Body of pancreas (tissue), 4 donors: ENCODE measurements at regions of chr3 and their contacts with region 1.

Region 1: DNA sequence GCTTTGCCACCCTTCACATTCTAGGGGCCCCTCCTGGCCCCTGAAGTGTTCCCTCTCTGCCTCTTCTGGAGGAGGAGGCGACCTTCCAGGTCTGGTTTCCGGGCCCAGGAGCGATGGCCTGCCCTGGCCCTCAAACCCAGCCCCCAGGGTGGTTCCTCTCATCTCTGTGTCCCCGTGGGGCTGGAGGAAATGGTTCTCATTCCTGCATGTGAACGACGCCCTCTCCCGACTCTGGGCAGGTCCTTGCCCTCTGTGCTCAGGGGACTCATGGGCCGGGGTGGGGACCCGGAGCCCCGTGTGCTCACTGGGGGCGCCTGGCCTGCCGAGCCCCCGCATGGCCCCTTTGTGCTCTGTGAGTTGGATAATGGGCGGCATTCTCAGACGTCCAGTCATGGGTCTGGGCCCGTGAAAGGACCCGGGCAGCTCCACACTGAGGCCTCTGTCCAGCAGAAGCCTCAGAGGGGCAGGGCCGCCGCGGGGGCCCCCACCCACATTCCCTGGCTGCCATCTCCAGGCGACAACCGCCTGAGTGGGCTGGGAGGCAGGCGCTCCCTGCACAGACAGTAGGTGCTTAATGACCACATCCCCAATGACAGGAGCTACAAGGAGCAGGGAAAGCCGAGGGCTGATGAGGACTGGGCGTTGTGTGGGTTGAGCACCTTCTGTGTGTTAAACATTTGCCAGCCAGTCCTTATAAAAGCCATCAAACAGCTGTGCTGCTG is 5.5 kb upstream of the PLXND1 start:
- DNase-seq: no peak
- ATAC-seq: peak; percentile 7
- H3K4me3 ChIP-seq: no peak overlapping the region
- H3K27ac ChIP-seq: peak overlapping the region in 1 of 4 donors; percentile 35
- H3K4me1 ChIP-seq: peaks cover 20% of the 10 kb centered on the region
- H3K27me3 ChIP-seq: no peaks in the 10 kb centered on the region
- CTCF ChIP-seq: no peak
- POLR2A ChIP-seq: no peak

Region 2: DNA sequence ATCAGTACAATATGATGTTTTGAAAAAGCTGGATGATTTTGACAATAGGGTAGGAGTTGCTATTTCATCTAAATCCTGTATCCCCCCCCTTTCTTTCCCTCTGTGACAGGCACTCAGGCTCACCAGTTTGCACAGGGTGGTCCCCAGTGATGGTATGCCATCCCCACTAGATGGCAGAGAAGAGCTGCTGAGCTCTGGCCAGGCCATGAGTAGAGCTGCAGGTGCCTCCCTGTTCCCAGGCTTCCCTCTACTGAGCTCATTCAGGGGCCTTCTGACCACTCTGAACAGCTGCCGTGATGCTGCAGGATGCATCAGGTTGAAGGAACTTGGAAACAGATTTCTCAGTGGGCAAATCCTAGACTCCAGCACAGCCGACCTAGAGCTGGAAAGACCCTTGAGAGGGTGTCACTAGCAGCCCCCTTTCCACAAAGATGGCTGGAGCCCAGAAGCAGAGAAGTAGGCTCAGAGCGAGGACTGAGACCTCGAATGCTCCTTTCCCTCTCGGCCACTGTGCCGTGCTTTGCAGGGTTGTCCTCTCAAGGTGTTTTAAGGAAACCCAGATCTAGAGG is 228.6 kb before region 1 on chr3:
- intact Hi-C with region 1: no loop called
- DNase-seq: peak; percentile 52 to 68 (median 66)
- ATAC-seq: peak; percentile 89
- H3K4me3 ChIP-seq: no peak overlapping the region
- H3K27ac ChIP-seq: no peak overlapping the region
- H3K4me1 ChIP-seq: no peaks in the 10 kb centered on the region
- H3K27me3 ChIP-seq: no peaks in the 10 kb centered on the region
- CTCF ChIP-seq: peak; percentile 26 to 71 (median 66)
- POLR2A ChIP-seq: no peak

Region 3: DNA sequence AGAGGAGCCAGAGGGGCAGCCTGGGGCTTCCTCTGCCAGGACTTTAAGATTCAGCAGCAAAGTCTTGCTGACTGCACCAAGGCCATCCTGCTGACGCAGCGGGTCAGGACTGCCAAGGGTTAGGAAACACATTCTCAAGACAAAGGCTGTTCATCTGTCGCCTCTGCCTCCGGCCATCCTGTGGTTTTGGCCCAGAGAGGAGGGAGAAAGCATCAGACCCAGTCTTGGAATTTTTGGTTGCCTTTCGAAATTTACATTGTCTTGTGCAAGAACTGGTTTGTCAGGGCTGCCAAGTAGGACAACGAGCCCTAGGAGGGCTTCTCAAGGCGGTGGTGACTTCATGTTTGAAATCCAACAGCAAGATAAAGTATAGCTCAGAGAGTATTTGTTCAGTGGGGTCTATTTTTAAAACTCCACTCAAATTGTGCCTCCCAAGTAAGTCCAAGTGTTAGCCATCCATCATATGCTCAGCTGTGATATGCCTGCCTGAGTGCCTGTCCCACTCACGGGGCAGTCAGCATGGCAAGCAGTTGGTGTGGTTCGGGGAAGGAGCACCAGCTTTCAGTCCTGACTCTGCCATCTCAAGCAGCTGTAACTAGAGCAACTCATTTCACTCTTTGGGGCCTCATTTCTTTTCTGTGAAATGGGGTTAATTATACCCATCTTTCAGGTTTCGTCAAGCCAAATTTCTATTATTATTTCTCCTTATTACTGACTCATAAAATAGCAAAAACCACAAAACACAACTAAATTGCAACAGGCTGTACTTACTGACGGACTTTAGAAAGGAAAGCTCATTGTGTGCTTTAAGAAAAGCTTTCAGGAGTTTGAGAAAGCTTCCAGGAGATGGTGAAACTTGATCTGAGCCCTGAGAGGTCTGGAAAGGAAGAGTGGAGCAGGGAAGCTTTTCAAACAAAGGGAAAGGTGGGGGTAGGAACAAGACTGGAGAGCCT is 126.0 kb before region 1 on chr3:
- intact Hi-C with region 1: loop called (anchors 10 kb)
- DNase-seq: peak; percentile 48 to 85 (median 58)
- ATAC-seq: peak; percentile 54
- H3K4me3 ChIP-seq: no peak overlapping the region
- H3K27ac ChIP-seq: peak overlapping the region in 2 of 4 donors; percentile 26 to 64
- H3K4me1 ChIP-seq: peaks cover 6% of the 10 kb centered on the region
- H3K27me3 ChIP-seq: no peaks in the 10 kb centered on the region
- CTCF ChIP-seq: no peak
- POLR2A ChIP-seq: no peak

Region 4: GRCh38 chr3:129890125-129890524 is 278.2 kb after region 1 on chr3:
- intact Hi-C with region 1: no loop called
- DNase-seq: peak in 3 of 4 donors; percentile 21 to 44 (median 33)
- ATAC-seq: no peak
- H3K4me3 ChIP-seq: no peak overlapping the region
- H3K27ac ChIP-seq: peak overlapping the region; percentile 31 to 66 (median 50)
- H3K4me1 ChIP-seq: peaks cover 37% of the 10 kb centered on the region
- H3K27me3 ChIP-seq: no peaks in the 10 kb centered on the region
- CTCF ChIP-seq: no peak
- POLR2A ChIP-seq: no peak